ENCODE measurements at regions of chr6 and their contacts with region 1.

Region 1: DNA sequence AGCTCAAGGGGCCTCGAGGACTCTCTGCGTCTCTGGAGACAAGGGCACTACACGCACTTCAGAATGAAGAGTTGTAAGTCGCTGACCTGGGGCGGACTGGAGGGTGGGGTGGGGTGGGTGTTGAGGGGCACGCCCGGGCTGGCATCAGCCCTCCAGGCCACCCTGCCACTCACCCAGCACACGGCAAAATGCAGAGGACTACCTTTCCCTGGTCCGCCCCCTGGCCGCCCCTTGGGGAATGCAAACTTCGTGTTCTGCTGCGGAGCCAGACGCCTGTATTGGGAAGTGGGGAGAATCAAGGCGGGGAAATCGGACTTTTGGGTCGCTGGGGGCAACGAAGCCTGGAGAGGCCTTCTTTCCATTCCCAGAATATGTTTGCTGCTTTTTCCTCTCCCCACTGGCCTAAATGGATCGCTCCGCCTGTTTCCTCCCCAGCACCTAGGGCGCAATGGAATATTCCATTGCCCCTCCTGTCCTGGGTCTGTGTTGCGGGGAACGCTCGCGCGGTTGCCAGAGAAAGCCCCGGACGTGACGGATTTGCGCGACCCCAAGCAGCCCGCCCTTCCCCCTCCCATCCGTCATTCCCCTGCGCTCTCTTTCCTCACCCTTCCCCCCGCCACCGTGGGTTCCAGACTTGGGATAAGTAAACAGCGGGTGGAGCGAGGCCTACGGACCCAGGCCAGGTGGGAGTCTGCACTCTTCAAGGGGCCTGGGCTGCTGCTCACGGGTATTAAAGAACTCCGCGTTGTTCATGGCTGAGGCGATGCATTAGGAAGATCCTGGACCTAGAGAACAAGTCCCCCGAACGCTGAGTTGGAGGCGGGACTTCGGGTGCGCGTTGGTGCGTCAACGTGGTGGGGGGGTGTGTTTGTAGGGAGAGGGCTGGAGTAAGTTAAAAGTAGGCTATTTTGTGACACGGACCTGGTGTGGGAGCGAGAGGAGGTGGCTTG is at the start of gene PPT2:
- DNase-seq: peak; percentile 91
- H3K27ac ChIP-seq: peak within 1 kb of the TSS; percentile 97
- CTCF ChIP-seq: no peak

Region 2: GRCh38 chr6:31639449-31639861 is 514.4 kb before region 1 on chr6:
- CTCF ChIA-PET with region 1: no interaction called
- POLR2A ChIA-PET with region 1: no interaction called
- DNase-seq: no peak
- H3K27ac ChIP-seq: peak overlapping the region; percentile 58
- CTCF ChIP-seq: no peak

Region 3: GRCh38 chr6:32118782-32119628 is 34.8 kb before region 1 on chr6:
- CTCF ChIA-PET with region 1: interaction called, 22 read pairs
- POLR2A ChIA-PET with region 1: interaction called, 3 read pairs
- DNase-seq: peak; percentile 75
- H3K27ac ChIP-seq: peak overlapping the region; percentile 71
- CTCF ChIP-seq: peak; percentile 93